H1 (cell line): ENCODE measurements at regions of chr3 and their contacts with region 1.

Region 1: GRCh38 chr3:163071697-163072096 is 1575.1 kb downstream of the OTOL1 start:
- DNase-seq: no peak
- H3K4me3 ChIP-seq: no peak overlapping the region
- H3K27ac ChIP-seq: no peak overlapping the region
- H3K4me1 ChIP-seq: no peaks in the 10 kb centered on the region
- H3K27me3 ChIP-seq: no peaks in the 10 kb centered on the region
- CTCF ChIP-seq: no peak
- EP300 ChIP-seq: no peak
- POLR2A ChIP-seq: no peak
- RAD21 ChIP-seq: no peak

Region 2: DNA sequence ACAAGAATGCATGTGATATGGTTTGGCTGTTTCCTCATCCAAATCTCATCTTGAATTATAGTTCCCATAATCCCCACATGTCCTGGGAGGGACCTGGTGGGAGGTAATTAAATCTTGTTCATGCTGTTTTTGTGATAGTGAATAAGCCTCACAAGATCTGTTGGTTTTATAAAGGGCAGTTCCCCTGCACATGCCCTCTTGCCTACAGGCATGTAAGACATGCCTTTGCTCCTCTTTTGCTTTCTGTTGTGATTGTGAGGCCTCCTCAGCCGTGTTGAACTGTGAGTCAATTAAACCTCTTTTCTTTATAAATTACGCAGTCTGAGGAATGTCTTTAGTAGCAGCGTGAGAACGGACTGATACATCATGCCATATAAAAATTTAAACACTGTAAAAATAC is 38.0 kb before region 1 on chr3:
- CTCF ChIA-PET with region 1: no interaction called
- POLR2A ChIA-PET with region 1: no interaction called
- DNase-seq: no peak
- H3K4me3 ChIP-seq: no peak overlapping the region
- H3K27ac ChIP-seq: no peak overlapping the region
- H3K4me1 ChIP-seq: peaks cover 0 to 2% (median 0%) of the 10 kb centered on the region in 4 experiments; a peak in 1 of 7 replicates
- H3K27me3 ChIP-seq: no peaks in the 10 kb centered on the region
- CTCF ChIP-seq: no peak
- EP300 ChIP-seq: no peak
- POLR2A ChIP-seq: no peak
- RAD21 ChIP-seq: no peak

Region 3: DNA sequence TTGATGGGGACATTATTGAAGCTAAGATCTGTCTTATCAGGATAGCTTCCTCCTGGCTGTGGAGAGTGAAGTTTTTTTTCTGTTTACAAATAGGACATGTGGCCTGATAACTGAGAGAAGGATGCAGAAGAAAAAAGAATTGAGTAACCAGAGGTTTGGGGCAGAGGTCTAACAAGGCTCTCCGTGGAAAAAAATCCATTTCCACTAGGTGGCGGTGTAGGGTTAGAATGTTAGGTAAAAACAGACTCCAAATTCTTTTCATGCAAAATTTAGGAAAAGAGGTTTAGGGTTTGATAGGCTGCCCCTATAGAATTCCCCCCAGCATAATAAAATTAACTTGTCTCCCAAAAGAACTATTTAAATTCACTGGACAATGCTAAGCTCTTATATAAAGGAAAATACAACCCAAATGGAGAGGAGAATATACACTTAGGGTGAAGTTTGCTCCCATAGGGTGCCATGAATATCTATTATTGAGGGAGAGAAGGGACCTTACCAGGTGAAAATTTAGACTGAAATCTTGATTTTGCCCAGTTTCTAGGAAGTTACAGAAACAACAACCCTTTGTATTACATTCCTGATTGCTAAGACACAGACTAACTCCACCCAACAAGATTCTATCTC is 14.7 kb before region 1 on chr3:
- CTCF ChIA-PET with region 1: interaction called, 14 read pairs
- POLR2A ChIA-PET with region 1: no interaction called
- DNase-seq: peak in 1 of 2 experiments; percentile 80
- H3K4me3 ChIP-seq: no peak overlapping the region
- H3K27ac ChIP-seq: no peak overlapping the region
- H3K4me1 ChIP-seq: no peaks in the 10 kb centered on the region
- H3K27me3 ChIP-seq: no peaks in the 10 kb centered on the region
- CTCF ChIP-seq: peak in 2 of 3 experiments; percentile 49 to 55; a peak in 3 of 4 replicates
- EP300 ChIP-seq: no peak
- POLR2A ChIP-seq: no peak
- RAD21 ChIP-seq: peak; percentile 69 to 78